GM10248 (cell line): ENCODE measurements at regions of chr3 and their contacts with region 1.

Region 1: GRCh38 chr3:69161587-69162307 is 39.4 kb upstream of the LMOD3 start:
- DNase-seq: peak; percentile 62
- CTCF ChIP-seq: peak; percentile 91

Region 2: DNA sequence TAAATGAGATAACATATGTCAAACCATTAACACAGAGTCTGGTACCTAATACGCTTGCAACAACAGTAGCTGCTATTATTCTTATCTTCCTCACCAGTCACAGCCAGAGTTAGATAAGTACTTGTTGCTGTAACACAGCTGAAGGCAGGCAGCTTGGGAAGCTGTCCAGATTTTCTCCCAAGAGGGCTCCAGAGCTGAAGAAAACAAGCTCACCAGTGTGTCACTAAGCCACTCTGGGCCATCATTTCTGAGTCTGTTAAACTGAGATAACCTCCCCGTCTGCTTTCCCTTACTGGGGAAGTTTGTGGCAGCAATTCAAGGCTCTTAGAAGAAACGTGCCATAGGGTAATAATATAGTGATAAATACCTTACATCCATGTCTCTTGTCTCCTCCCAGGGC is 455.7 kb before region 1 on chr3:
- CTCF ChIA-PET with region 1: no interaction called
- POLR2A ChIA-PET with region 1: no interaction called
- DNase-seq: no peak
- CTCF ChIP-seq: no peak

Region 3: DNA sequence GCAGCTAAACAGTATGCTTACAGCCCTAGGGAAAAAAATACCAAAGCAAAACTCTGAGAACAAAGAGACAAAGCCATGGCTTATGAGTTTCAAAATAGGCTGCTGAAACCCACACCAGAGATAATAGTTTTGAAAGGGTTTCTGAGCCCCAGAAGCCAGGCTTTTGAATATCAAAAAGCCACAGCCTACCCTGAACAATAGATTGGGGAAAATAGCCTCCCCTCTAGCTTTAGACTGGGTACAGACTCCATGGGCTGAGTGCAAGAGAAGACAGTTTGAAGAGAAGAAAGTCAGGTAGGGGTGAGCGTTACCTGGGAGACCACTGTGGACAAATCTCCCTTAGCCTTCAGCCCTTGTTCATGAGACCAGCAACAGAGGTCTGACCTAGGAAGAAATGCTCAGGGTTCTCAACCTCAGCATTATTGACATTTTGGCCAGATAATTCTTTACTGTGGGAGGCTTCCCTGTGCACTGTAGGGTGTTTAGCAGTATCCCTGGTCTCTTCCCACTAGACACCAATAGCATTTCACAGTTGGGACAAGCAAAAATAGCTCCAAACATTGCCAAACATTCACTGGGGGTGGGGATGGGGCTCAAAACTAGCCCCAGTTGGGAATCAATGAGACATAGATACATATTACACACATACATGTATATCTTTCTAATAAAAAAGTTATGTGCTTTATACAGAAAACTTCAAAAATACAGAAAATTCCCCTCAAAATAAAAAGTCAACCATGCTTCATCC is 217.8 kb before region 1 on chr3:
- CTCF ChIA-PET with region 1: no interaction called
- POLR2A ChIA-PET with region 1: no interaction called
- DNase-seq: no peak
- CTCF ChIP-seq: no peak

Region 4: GRCh38 chr3:69120879-69121464 is 40.8 kb before region 1 on chr3:
- CTCF ChIA-PET with region 1: interaction called, 26 read pairs
- POLR2A ChIA-PET with region 1: no interaction called
- DNase-seq: peak; percentile 46
- CTCF ChIP-seq: peak; percentile 95

Region 5: GRCh38 chr3:69144631-69145245 is 17.0 kb before region 1 on chr3:
- CTCF ChIA-PET with region 1: interaction called, 20 read pairs
- POLR2A ChIA-PET with region 1: no interaction called
- DNase-seq: no peak
- CTCF ChIP-seq: no peak

Region 6: DNA sequence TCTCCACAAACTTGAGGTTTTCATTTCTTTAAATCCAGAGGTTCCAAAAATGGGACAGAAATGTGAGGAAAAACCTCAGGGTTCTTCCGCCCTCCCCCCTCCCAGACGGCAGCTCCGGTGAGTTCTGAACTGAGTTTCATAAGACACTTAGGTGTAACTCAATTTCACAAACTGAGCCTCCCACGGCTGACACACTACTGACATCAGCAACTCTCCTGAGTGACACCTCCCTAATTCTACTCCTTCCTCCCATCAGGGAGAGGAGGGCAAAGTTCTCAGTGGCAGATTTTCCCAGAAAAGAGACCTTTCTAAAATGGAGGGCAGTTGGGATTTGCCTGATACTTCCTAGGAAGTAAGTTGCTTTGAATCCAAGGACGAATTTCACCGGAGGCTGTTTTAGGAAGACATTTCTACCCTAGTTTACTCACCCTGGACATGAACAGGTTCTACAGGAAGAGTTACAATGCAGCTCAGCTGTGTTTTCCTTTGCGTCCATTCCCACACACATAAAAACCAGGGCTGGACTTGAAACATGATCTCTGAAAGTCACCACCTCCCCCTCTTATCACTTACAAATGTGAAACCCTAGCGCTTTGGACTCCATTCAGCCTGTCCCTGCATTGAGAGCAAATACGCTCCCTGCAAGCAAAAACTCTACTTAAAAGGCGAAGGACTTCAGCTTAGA is 38.8 kb after region 1 on chr3:
- CTCF ChIA-PET with region 1: interaction called, 21 read pairs
- POLR2A ChIA-PET with region 1: no interaction called
- DNase-seq: no peak
- CTCF ChIP-seq: no peak

Region 7: DNA sequence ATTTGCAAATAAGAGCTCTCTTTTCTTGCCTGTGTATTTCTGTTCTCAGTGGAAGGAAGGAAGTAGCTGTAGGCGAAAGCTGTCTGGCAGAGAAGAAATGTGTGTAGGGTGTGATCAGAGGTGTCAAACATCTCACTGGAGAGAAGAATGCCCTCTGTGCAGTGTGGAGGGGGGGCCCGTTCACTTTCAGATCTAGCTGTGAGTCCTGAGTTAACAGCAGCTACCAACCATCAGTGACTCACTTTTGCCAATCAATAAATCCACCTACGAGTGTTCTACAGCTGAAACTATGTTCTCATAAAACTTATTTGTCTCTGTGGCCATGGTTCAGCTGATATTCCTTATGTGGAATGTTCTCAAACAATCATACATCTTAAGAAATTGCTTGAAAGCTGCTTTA is 120.4 kb after region 1 on chr3:
- CTCF ChIA-PET with region 1: interaction called, 10 read pairs
- POLR2A ChIA-PET with region 1: no interaction called
- DNase-seq: peak; percentile 19
- CTCF ChIP-seq: no peak

Region 8: DNA sequence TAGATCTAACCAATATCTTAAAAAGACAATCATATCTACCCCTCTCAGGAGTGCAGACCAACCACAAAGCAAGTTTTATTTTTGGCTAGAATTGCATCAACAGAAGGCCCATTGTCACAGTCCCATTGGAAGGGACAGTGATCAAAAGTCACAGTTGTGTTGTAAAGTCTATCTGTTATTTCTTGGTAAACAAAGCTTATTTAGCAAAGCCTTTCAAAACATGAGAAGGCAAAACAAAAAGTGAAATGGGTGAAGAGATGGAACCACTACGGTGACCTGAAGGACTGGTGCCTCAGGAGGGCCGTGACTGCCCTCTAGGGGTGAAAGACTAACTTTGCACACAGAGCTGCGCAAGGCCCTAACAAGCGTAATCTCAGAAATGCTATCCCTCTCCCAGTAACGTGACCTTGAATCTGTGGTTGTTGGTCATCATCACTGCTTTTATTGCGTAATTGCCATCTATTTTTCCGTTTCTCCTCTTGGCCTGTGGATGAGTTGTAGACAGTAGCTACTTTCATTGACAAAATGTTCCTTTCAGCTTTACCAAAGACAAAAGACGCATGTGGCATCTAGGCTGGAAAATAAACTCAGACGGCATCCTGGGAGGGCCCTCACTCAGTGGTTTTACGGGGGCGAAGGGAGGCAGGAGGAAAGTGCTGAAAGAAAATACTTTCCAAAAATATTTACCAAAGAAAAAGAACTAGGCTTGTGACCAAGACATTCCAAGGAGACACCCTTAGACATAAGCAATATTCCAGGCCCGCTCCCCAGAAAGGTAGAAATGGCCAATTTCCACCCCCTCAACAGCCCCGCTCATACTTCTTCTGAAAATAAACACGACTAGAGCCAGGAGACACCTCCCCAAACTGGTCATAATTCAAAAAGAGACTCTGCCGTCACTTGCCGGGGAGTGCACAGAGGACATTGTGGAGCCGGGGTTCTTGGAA is 144.8 kb after region 1 on chr3:
- CTCF ChIA-PET with region 1: interaction called, 258 read pairs
- POLR2A ChIA-PET with region 1: no interaction called
- DNase-seq: peak; percentile 68
- CTCF ChIP-seq: peak; percentile 93

Region 9: GRCh38 chr3:69439643-69440270 is 278.0 kb after region 1 on chr3:
- CTCF ChIA-PET with region 1: interaction called, 25 read pairs
- POLR2A ChIA-PET with region 1: no interaction called
- DNase-seq: peak; percentile 13
- CTCF ChIP-seq: peak; percentile 59